Dorsolateral prefrontal cortex (tissue), 120 donors: ENCODE measurements at regions of chr1 and their contacts with region 1.

Region 1: DNA sequence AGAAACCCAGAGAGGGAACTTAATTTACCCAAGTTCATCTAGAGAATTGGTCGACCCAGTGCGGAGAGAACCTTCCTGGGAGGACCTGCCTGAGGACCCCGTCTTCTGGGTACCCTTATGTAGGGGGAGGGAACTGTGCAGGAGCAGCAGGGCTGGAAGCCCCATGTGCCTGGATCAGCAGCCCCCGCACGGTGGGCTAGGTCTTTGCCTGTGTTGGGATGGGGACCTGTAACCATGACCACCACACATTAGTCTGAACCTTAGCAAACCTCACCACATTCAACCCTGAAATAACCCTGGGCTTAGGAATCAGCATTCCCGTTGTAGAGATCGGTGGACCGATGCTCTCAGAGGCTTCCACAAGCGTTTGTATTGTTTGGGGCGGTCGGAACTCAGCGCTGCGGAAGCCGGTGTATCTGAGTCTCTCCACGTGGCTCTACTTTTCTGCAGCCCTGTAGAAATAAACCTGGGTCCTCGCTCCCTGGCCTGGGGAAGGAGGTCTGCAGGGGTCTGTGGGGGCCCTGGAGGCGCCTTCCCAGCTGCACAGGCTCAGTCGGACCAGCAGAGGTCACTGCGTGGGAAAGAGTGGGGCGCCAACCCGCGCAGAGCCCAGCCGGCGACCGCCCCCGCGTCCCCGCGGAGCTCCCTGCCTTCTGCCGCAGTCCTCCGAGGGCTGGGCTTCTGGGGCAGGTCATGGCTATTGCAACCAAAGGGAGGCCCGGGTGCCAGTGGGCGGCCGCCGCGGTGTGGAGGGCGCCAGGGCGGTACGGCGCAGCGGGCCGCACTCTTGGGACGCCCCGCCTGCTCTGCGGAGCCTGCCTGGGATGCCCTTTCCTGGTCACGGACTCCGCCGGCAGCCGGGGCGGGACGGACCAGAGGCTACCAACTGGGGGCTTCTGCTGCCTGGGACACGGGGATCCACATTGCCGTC is 36.2 kb upstream of the KCNA10 start:
- DNase-seq: peak; percentile 53 to 83 (median 70)
- H3K4me3 ChIP-seq: peak overlapping the region; percentile 43 to 90 (median 62)
- H3K27ac ChIP-seq: peak overlapping the region; percentile 49 to 96 (median 90)
- H3K27me3 ChIP-seq: no peaks in the 10 kb centered on the region
- CTCF ChIP-seq: peak; percentile 57 to 96 (median 88)

Region 2: DNA sequence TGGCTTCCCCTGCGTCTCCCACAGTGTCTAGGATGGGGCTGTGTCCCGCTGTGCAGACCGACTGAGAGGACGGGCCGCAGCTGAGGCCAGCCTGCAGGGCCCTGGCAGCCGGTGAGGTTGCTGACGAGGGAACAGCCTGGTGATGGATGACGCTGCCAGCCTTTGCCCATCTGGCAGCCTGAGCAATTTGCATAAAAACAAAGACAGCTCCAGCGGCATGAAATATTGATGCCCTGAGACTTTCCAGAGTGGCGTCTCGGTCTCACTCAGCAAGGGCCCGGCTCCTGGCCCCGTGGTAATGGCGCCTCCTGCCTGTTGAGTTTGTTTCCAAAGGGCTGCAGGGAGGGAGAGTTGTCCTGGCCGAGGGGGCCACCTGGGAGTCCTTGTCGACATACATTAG is 17.1 kb before region 1 on chr1:
- intact Hi-C with region 1: loop called in 1 of 2 experiments (anchors 2 kb)
- DNase-seq: peak; percentile 48 to 87 (median 77)
- H3K4me3 ChIP-seq: peak overlapping the region in 10 of 59 donors; percentile 6 to 21 (median 17)
- H3K27ac ChIP-seq: peak overlapping the region in 13 of 59 donors; percentile 1 to 70 (median 19)
- H3K27me3 ChIP-seq: peaks cover 0 to 3% (median 0%) of the 10 kb centered on the region in 45 donors
- CTCF ChIP-seq: peak in 36 of 56 donors; percentile 9 to 59 (median 31)

Region 3: DNA sequence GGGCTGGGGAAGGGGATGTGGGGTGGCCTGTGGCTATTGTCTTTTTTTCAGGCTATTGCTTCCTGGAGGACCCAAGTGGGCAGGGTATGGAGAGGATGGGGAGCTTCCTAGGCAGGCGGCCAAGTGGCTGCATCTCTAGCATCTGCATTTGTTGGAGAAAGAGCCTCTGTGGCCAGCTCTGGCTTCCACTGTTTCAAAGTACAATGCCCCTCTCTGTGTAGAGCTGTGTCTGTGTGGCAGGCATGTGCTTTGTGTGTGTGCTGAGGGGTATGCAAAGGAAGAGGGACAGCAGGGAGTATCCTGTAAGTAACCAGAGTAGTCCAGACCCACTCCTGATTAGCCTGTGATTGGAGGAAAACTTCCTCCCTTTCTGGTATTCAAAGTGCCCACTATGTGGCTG is 10.4 kb after region 1 on chr1:
- intact Hi-C with region 1: loop called in 1 of 2 experiments (anchors 1 kb)
- DNase-seq: peak in 9 of 10 donors; percentile 87 to 96 (median 90)
- H3K4me3 ChIP-seq: peak overlapping the region in 7 of 59 donors; percentile 6 to 31 (median 17)
- H3K27ac ChIP-seq: peak overlapping the region in 44 of 59 donors; percentile 1 to 82 (median 58)
- H3K27me3 ChIP-seq: peaks cover 0 to 2% (median 0%) of the 10 kb centered on the region in 45 donors
- CTCF ChIP-seq: peak in 8 of 56 donors; percentile 13 to 51 (median 26)

Region 4: DNA sequence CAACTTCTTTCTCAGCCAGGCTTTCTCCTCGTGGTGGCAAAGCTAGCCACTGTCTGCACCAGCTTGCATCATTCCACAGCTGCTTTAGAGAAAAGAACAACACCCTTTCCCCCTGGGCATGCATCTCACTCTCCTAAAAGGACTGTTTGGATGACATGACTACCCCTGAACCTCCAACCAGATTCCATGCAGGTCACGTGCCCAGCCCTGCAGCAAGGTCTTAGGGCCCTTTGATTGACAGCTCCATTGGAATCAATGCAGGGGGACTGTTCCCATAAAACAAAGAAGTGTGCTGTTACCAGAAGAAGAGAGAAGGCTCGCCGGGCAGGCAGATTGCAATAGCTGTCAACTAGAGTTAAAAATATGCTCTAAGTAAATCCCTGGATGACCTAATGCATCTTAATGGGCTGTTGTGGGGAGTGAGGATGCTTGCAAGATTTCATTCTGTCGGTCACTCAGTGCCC is 26.6 kb after region 1 on chr1:
- intact Hi-C with region 1: loop called in 1 of 2 experiments (anchors 1 kb)
- DNase-seq: peak in 8 of 10 donors; percentile 28 to 73 (median 49)
- H3K4me3 ChIP-seq: peak overlapping the region in 10 of 59 donors; percentile 3 to 45 (median 18)
- H3K27ac ChIP-seq: peak overlapping the region; percentile 52 to 95 (median 85)
- H3K27me3 ChIP-seq: no peaks in the 10 kb centered on the region
- CTCF ChIP-seq: peak in 1 of 56 donors; percentile 37

Region 5: GRCh38 chr1:110619412-110620249 is 64.5 kb after region 1 on chr1:
- intact Hi-C with region 1: loop called (anchors 1 kb)
- DNase-seq: peak; percentile 82 to 91 (median 89)
- H3K4me3 ChIP-seq: peak overlapping the region in 41 of 59 donors; percentile 4 to 61 (median 36)
- H3K27ac ChIP-seq: peak overlapping the region in 38 of 59 donors; percentile 8 to 76 (median 51)
- H3K27me3 ChIP-seq: peaks cover 0 to 8% (median 0%) of the 10 kb centered on the region in 45 donors
- CTCF ChIP-seq: peak; percentile 87 to 99 (median 97)

Region 6: GRCh38 chr1:110766025-110766647 is 211.0 kb after region 1 on chr1:
- intact Hi-C with region 1: loop called in 1 of 2 experiments (anchors 5 kb)
- DNase-seq: peak in 5 of 10 donors; percentile 34 to 51 (median 38)
- H3K4me3 ChIP-seq: no peak overlapping the region
- H3K27ac ChIP-seq: no peak overlapping the region
- H3K27me3 ChIP-seq: peaks cover 0 to 5% (median 0%) of the 10 kb centered on the region in 45 donors
- CTCF ChIP-seq: peak; percentile 64 to 98 (median 90)